Prostate gland (tissue), 2 donors: ENCODE measurements at regions of chr1 and their contacts with region 1.

Region 1: DNA sequence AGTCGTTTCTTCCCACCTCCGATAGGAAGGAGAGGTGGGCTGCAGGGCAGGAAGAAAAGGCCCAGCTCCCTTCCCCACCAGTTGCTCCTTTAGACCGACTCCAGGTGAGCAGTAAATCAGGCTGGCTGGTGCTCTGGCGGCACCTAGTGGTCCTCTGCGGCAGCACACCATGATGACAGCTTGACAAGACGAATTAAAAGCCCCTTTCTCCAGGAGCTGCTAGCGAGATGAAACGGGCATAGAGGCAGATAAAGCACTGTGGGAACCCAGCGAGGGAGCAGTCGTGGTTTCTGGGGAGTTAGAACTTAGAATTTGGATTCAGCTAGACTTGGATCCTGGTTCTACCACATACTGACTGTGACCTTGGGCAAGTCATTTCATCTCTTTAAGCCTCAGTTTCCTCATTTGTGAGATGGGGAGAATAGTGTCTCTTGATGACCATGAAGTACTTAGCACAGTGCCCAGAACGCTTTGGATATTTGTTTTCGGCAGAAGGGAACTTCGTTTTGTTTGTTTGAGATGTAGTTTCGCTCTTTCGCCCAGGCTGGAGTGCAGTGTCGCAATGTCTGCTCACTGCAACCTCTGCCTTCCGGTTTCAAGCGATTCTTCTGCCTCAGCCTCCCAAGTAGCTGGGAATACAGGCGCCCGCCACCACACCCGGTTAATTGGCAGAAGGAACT is 21.8 kb upstream of the COL9A2 start:
- DNase-seq: peak; percentile 78
- H3K4me3 ChIP-seq: no peak overlapping the region
- H3K27ac ChIP-seq: peak overlapping the region in 1 of 2 donors; percentile 32
- H3K4me1 ChIP-seq: no peaks in the 10 kb centered on the region
- H3K27me3 ChIP-seq: no peaks in the 10 kb centered on the region
- CTCF ChIP-seq: peak; percentile 91 to 96 (median 94)
- POLR2A ChIP-seq: no peak

Region 2: DNA sequence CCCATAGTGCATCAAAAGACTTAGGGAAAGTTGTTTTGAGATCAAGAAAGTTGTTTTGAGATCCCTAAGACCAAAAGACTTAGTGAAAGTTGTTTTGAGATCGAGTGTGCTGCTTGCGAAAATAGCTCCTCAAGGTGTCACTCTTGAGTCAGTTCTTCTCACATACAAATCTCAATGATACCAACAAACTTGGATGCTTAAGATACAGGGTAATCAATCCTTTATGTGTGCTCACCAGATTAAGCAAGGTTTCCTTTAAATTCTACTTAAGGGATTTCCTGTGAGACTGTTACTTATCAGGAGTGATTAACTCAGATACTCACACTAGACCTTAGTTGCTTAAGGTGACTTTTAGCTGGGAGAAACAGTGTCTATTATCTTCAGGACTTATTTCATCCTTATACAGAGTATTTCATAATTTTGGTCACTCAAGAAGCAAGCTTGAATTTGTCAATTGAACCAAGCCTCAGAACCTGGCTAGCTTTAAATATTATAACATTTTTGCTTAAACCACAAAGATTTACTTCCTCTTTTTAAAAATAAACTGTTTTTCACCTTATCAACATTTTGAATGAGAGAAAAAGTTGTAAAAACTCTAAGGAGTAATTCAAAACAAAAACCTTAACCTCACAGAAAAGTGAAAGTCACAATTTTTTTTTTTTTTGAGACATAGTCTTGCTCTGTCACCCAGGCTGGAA is 185.7 kb before region 1 on chr1:
- intact Hi-C with region 1: loop called (anchors 5 kb)
- DNase-seq: peak; percentile 28
- H3K4me3 ChIP-seq: no peak overlapping the region
- H3K27ac ChIP-seq: no peak overlapping the region
- H3K4me1 ChIP-seq: no peaks in the 10 kb centered on the region
- H3K27me3 ChIP-seq: no peaks in the 10 kb centered on the region
- CTCF ChIP-seq: peak; percentile 37 to 62 (median 50)
- POLR2A ChIP-seq: no peak